ENCODE measurements at regions of chr12 and their contacts with region 1.

Region 1: GRCh38 chr12:75505706-75506312 is 5.6 kb downstream of the KRR1 start:
- DNase-seq: no peak
- H3K4me3 ChIP-seq: no peak overlapping the region
- CTCF ChIP-seq: peak; percentile 41

Region 2: GRCh38 chr12:75491169-75491568 is 14.6 kb before region 1 on chr12:
- CTCF ChIA-PET with region 1: interaction called, 81 read pairs
- POLR2A ChIA-PET with region 1: interaction called, 5 read pairs
- DNase-seq: no peak
- H3K4me3 ChIP-seq: no peak overlapping the region
- CTCF ChIP-seq: no peak

Region 3: GRCh38 chr12:76366163-76366562 is 860.4 kb after region 1 on chr12:
- CTCF ChIA-PET with region 1: no interaction called
- POLR2A ChIA-PET with region 1: no interaction called
- DNase-seq: no peak
- H3K4me3 ChIP-seq: no peak overlapping the region
- CTCF ChIP-seq: no peak